ENCODE measurements at regions of chr1 and their contacts with region 1.

Region 1: GRCh38 chr1:68120136-68120791 is 69.8 kb upstream of the DIRAS3 start:
- DNase-seq: no peak

Region 2: DNA sequence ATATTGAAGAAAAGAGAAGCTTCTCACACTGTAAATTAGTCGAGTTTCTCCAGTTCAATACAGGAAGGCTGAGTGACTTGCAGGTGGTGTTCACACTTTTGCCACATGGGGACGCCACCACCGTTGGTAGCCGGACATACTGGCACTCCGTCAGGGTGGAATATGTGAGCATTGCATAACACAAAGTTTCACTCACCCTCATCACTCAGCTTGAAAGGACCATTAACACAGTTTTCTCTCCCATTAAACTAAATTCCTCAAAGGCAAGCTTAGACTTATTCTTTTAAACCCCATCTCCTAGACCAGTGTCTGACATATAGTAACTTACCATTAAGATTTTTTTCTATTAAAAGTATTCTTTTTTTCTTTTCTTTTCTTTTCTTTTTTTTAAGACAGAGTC is 584.8 kb before region 1 on chr1:
- intact Hi-C with region 1: loop called (anchors 10 kb)
- DNase-seq: peak; percentile 84

Region 3: DNA sequence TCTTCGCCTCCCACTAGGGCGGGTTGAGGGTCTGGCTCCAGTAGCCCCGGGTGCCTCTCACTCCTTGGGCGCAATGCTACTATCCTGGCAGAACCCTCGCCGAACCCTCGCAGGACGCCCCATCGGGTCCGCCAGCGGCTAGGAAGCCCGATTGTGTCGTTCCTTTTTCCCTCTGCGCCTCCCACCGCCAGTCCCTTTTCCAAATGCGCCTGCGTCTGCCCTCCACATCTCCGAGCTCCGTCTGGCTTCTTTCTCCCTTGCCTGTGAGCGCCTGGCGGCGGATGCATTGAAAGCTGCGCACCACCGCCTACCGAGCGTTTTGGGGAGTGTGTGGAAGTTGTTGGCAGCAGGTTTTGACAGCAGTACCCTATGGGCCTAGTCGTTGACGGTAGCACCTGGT is 68.8 kb before region 1 on chr1:
- intact Hi-C with region 1: no loop called
- DNase-seq: no peak

Region 4: DNA sequence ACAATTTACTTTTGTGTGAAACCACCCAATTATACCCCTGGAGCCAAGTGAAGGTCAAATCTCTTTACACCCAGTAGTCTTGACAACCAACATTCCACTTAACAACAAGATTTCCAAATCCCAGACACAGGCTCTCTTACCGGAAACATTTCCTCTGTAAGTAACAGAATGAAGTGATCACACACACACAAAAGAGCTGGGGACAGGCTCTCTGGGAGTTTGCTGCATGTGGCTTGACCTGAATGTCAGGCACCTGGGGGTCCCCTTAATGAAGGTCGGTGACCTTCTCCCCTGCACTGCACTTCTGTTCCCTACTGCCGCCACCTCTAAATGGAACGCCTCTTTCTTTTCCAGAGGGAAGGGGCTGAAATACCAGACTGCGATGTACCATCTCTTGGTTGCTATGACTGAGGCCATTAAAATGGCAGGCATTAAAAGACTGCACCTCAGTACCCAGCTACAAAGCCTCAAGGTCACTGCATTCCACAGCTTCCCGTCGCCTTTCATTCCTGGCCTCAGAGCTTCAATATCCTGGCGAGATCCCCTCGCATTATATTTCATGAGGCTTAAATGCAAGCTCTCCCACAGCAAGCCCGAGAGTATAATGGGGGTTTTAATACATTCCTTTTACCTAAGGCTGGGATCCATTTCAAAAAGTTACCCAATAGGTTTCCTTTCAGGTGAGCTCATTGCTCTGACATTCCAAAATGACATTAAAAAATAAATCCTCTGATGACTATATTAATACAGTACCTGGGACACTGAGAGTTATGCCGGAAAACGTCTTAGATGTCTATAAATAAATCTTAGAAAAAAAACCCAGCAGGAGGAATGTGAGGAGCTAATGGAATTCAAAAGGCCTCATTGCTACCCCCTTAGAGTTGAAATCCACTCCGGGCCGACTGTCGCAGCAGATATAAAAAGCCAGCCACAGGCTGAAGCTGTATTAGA is 21.1 kb after region 1 on chr1:
- intact Hi-C with region 1: no loop called
- DNase-seq: no peak

Region 5: DNA sequence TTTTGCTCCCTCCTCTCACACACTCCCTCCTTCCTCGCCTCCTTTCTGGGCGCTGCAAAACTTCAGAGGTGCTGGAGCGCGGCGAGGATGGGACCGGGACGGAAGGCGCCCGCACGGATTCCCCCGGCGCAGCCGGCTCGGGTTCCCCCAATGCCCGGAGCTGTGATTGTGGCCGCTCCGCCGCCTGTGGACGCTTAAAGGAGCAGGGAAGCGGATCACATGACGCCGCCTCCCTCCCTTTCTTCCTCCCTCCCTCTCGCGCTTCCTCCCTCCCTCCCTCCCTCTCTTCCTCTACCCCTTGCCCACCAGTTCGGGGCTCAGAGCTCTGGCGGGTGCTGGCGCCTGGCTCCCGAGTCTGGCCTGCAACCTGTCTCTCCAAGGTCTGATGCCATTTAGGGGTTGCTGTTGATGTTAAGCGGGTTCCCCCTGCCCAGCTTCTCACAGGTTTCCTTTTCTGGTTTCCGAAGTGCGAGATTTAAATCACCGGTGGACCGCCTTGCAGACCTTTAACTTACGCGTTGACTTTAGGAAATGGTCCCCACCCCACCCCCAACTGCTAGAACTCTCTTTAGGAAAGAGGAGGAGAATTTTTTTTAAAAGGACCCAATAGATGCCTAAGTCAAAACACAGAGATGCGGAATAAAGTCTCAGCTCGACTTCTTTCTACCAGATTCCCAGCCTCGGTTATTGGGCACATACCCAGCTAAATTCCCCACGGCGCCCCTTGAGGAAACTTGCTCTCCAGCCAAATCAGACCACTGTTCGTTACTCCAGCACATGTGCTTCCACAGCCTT is 112.3 kb after region 1 on chr1 and contains the start of gene WLS:
- intact Hi-C with region 1: loop called (anchors 5 kb)
- DNase-seq: peak; percentile 91
- total RNA-seq, gene WLS: 78.0 TPM

Region 6: DNA sequence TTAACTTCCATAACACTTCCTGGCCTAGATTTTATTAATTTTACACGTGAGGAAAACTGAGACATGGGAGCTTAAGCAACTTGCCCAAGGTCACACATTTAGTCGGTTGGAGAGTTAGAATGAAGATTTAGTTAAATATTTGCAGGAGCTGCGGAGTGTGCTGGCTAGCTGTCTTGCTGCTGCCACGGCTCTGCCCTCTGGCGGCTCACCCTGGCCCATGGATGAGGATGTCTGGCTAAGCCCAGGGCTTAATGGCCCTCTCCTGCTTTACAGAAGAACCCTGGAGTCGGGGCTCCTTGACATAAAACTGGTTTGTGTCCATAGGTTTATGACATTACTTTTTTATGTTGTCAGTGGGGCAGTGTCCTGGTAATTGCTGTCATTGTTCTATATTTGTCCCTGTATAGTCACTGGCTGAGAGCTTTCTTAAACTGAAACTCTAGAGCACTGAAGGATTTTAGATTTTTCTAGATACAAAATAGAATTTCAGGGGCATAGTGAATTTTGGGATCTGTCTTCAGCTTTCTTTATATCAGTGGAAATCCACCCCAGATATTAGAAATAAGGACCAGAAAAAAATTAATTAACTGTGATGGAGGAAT is 200.9 kb after region 1 on chr1:
- intact Hi-C with region 1: loop called (anchors 1 kb)
- DNase-seq: no peak

Region 7: DNA sequence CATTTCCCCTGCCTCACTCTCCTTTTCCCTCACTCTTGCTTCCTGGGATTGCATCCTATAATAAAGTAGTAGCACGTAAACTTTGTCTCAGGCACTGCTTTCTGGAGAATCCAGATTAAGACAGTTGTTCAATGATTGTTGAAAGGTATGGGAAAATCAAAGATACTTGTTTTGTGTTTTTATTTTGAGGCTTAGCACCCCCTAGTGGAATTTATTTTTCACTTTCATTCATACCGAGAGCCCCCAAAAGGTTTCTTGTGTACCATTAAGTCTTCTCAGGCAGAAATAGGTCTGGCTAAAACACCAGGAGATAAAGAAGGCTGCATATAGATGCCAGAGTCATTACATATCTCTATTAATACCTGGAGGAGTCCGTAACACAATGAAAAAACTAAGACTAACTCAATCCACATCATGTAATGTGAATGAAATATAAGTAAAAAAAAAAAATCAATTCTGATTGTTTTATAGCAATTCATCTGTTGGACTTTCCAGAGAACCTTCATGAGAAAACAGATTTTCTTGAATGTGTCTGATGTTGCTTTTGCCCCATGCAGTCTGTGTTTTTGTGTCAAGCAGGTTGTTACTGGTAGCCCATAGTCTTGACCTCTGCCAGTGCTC is 226.0 kb after region 1 on chr1:
- intact Hi-C with region 1: loop called (anchors 1 kb)
- DNase-seq: no peak

Region 8: DNA sequence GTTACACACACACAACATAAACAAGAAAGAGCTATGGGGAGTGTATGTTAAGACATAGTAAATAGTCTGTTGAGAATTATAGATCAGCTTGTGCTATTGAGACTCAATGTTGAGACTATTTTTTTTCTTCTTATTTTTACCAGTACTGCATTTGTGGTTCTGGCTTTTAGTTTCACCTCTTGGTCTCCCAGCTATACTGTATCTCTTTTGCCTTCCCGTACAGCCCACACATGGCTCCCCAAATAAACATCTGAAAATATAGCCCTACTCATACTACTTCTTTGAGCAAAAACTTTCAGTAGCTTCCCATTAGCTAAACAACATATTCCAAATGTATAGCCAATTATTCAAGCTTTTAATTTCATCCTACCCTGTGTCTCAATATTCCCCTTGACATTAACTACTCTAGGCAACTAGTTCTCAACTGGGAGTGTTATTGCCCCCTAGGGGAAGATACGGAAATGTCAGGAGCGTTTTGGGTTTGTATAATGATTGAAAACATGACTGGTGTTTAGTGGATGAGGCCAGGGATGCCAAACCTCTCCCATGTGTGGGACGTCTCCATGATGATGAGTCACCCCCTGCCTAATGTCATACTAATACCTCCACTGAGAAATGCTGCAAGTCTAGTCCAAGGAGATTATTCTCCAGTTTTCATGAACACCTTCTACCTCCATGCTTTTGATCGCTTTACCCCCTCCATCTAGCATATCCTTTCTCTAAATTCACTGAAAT is 322.7 kb after region 1 on chr1:
- intact Hi-C with region 1: loop called (anchors 10 kb)
- DNase-seq: no peak